ENCODE measurements at regions of chr3 and their contacts with region 1.

Region 1: GRCh38 chr3:64484289-64484992 is 203.4 kb downstream of the ADAMTS9 start:
- DNase-seq: peak; percentile 80
- H3K4me3 Mint-ChIP-seq: no peak overlapping the region
- H3K27ac Mint-ChIP-seq: no peak overlapping the region
- H3K4me1 Mint-ChIP-seq: peaks cover 5% of the 10 kb centered on the region
- H3K27me3 Mint-ChIP-seq: peaks cover 19% of the 10 kb centered on the region

Region 2: DNA sequence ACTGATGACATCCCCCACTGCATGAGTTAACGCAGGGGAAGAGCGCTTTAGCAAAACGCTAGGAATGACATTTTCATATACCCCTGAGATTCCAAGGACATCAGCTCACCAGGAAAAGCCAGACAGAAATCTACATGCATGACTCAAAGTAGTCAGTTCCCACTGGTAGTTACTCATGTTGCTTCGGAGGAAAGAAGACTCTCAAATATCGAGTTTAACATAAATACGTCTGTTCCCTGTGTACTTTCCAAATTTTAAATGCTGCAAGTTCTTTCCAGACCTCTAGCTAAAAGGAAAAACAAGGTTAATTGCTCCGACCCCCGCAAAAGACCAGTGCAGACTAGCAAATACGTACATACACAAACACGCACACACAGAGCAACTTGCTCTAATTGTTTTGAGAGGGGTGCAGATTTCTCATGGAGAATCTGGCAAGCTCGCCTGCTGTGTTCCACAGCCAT is 143.8 kb before region 1 on chr3:
- CTCF ChIA-PET with region 1: no interaction called
- DNase-seq: no peak
- H3K4me3 Mint-ChIP-seq: no peak overlapping the region
- H3K27ac Mint-ChIP-seq: no peak overlapping the region
- H3K4me1 Mint-ChIP-seq: no peaks in the 10 kb centered on the region
- H3K27me3 Mint-ChIP-seq: peaks cover 12% of the 10 kb centered on the region

Region 3: DNA sequence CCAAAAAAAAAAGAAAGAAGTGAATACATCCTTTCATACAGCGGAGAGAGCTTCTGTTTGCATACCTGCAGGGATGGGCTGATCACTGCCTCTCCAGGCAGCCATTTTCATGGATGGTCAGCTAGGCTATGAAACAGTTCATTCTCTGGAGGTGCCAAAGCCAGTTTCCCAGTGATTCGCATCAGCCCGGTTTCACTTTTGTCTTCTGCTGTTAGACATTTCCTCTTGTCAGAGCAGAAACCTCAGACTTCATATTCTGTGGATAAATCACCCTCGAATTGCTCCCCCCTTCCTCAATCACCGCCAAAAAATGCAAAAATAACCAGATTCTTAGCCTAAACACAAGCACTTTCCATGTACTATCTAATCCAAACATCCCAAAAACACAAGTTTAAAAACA is 22.2 kb before region 1 on chr3:
- CTCF ChIA-PET with region 1: interaction called, 13 read pairs
- DNase-seq: no peak
- H3K4me3 Mint-ChIP-seq: no peak overlapping the region
- H3K27ac Mint-ChIP-seq: no peak overlapping the region
- H3K4me1 Mint-ChIP-seq: no peaks in the 10 kb centered on the region
- H3K27me3 Mint-ChIP-seq: no peaks in the 10 kb centered on the region

Measured in activated naive CD4-positive, alpha-beta T cell treated with anti-CD3 and anti-CD28 coated beads, Interleukin-2, amount 10 ng/mL, durations not matched to agents 7 days and 5 days (primary cell).